IMR-90 (cell line): ENCODE measurements at regions of chr19 and their contacts with region 1.

Region 1: GRCh38 chr19:40190891-40191835 is at the start of gene MAP3K10:
- DNase-seq: peak; percentile 51
- ATAC-seq: peak; percentile 93
- H3K4me3 ChIP-seq: peak within 1 kb of the TSS; percentile 96
- H3K27ac ChIP-seq: peak within 1 kb of the TSS; percentile 96
- H3K4me1 ChIP-seq: peaks cover 9% of the 10 kb centered on the region
- H3K27me3 ChIP-seq: no peaks in the 10 kb centered on the region
- CTCF ChIP-seq: no peak
- POLR2A ChIP-seq: no peak
- RAD21 ChIP-seq: no peak
- total RNA-seq, gene MAP3K10: 1.4 and 1.8 TPM in 2 replicates

Region 2: DNA sequence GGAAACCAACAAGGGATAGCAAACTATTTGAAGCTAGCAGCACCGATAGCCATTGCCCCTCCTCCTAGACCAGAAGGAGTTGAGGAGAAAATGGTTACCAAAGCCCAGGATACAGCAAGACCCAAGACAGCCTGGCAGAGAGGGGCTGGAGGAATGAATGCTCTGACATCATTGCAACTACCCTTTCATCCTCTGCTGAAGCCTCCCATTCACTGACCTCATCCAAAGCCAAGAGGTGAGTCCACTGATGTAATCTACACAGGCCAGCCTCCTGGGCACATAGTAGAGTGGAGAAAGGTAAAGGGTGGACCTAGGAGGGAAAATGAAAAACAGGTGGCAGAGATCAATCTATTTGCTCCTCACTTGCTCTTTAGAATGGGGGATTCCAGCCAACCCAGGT is 57.7 kb before region 1 on chr19:
- CTCF ChIA-PET with region 1: no interaction called
- POLR2A ChIA-PET with region 1: no interaction called
- dilution Hi-C with region 1: no loop called
- in situ Hi-C with region 1: no loop called
- intact Hi-C with region 1: no loop called
- DNase-seq: no peak
- ATAC-seq: no peak
- H3K4me3 ChIP-seq: no peak overlapping the region
- H3K27ac ChIP-seq: no peak overlapping the region
- H3K4me1 ChIP-seq: no peaks in the 10 kb centered on the region
- H3K27me3 ChIP-seq: peaks cover 12% of the 10 kb centered on the region
- CTCF ChIP-seq: no peak
- POLR2A ChIP-seq: no peak
- RAD21 ChIP-seq: no peak

Region 3: DNA sequence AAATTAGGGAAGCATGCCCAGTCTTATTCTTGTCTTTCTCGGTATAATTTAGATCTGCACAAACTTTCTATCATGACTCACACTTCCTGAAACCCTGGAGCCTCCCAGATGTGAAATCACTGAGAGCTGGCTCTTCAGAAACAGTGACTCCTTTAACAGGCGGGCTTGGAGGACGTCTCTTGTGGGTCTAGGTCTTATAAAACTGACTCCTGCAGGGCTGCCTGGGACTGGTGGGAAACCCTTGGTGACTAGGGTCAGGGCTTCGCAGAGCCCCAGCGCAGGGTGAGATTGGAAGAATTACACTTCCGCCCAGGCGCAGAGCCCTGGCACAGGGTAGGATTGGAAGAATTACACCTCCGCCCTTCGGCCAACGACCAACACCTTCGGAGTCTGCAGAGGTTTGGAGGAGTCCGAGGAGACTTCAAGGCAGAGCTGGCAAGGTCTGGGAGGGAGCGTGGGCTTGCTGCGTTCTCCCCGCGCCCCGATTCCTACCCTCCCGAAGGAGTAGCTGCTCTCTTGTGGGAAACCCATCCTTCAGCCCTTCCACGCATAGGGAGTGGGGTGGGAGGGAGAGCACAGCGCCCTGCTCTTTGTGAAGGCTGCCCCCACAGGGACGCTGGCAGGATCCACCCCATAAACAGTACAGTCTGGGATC is 43.3 kb before region 1 on chr19:
- CTCF ChIA-PET with region 1: no interaction called
- POLR2A ChIA-PET with region 1: no interaction called
- dilution Hi-C with region 1: no loop called
- in situ Hi-C with region 1: no loop called
- intact Hi-C with region 1: loop called (anchors 2 kb)
- DNase-seq: peak; percentile 77
- ATAC-seq: peak; percentile 95
- H3K4me3 ChIP-seq: no peak overlapping the region
- H3K27ac ChIP-seq: no peak overlapping the region
- H3K4me1 ChIP-seq: peaks cover 8% of the 10 kb centered on the region
- H3K27me3 ChIP-seq: no peaks in the 10 kb centered on the region
- CTCF ChIP-seq: no peak
- POLR2A ChIP-seq: no peak
- RAD21 ChIP-seq: no peak